ENCODE measurements at regions of chr13 and their contacts with region 1.

Region 1: GRCh38 chr13:102773441-102774215 is at the start of gene TEX30:
- DNase-seq: peak; percentile 81 to 89
- ATAC-seq: peak; percentile 99 to 100 (median 99)
- H3K4me3 ChIP-seq: peak within 1 kb of the TSS; percentile 63 to 96 (median 86)
- H3K27ac ChIP-seq: peak within 1 kb of the TSS; percentile 32 to 93 (median 83)
- H3K4me1 ChIP-seq: peaks cover 0 to 30% (median 12%) of the 10 kb centered on the region in 9 donors
- H3K27me3 ChIP-seq: no peaks in the 10 kb centered on the region
- CTCF ChIP-seq: peak in 4 of 9 donors; percentile 13 to 23 (median 18)
- total RNA-seq, gene TEX30: 3.9 to 12.3 (median 7.6) TPM

Region 2: GRCh38 chr13:102729560-102730270 is 43.9 kb before region 1 on chr13:
- intact Hi-C with region 1: no loop called
- DNase-seq: no peak
- ATAC-seq: peak in 2 of 8 donors; percentile 28 to 42
- H3K4me3 ChIP-seq: no peak overlapping the region
- H3K27ac ChIP-seq: no peak overlapping the region
- H3K4me1 ChIP-seq: peaks cover 0 to 11% (median 0%) of the 10 kb centered on the region in 9 donors
- H3K27me3 ChIP-seq: no peaks in the 10 kb centered on the region
- CTCF ChIP-seq: no peak

Region 3: DNA sequence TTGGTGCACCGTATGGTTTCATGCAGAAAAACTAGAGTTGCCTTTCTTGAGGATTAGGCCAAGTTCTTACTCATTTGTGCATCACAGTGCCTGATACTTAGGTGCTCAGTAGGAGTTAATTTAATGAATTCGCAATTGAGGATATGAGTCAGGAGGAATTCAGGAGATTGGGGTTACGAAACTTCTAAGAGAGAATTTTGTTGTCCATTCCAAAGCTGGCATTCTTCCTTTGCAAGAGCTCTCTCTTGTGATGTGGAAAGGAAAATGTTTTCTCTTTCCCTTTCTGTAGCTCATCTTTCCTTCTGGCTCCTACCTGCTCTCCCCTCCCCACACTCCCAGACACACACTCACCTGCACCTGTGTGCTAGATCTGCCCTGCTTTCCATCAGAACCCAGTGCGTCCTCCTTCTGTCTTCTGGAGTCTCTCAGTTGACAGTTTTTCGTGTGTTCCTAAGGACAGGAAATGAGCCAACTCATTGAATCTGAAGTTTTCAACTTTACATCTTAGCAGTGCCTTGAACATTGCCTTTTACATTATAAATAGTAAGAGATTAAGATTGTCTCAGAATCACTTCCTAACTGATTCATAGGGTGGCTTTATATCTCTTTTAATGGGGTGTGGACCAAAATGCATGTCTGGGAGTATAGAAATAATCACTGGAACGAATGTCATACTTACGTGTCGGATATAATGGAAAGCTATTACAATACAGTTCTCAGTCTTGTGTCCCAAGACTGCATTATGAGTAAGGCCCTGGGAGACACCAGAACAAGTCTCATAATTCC is 52.5 kb after region 1 on chr13:
- intact Hi-C with region 1: no loop called
- DNase-seq: no peak
- ATAC-seq: peak in 1 of 8 donors; percentile 10
- H3K4me3 ChIP-seq: no peak overlapping the region
- H3K27ac ChIP-seq: no peak overlapping the region
- H3K4me1 ChIP-seq: peaks cover 0 to 7% (median 3%) of the 10 kb centered on the region in 9 donors
- H3K27me3 ChIP-seq: no peaks in the 10 kb centered on the region
- CTCF ChIP-seq: no peak

Region 4: GRCh38 chr13:102845630-102846260 is 72.1 kb after region 1 on chr13 and contains the start of gene ERCC5:
- intact Hi-C with region 1: loop called in 1 of 10 experiments (anchors 5 kb)
- DNase-seq: peak; percentile 93 to 96
- ATAC-seq: peak; percentile 93 to 97 (median 95)
- H3K4me3 ChIP-seq: peak within 1 kb of the TSS; percentile 76 to 98 (median 88)
- H3K27ac ChIP-seq: peak within 1 kb of the TSS; percentile 88 to 98 (median 95)
- H3K4me1 ChIP-seq: peaks cover 0 to 37% (median 28%) of the 10 kb centered on the region in 9 donors
- H3K27me3 ChIP-seq: no peaks in the 10 kb centered on the region
- CTCF ChIP-seq: peak in 1 of 9 donors; percentile 12
- total RNA-seq, gene ERCC5: 26.5 to 37.7 (median 33.4) TPM

Measured in heart right ventricle (tissue), 16 donors.